Activated CD4-positive, alpha-beta memory T cell treated with anti-CD3 and anti-CD28 coated beads for 36 hours (primary cell): ENCODE measurements at regions of chr19 and their contacts with region 1.

Region 1: GRCh38 chr19:49817964-49818648 is at the start of gene MED25:
- DNase-seq: peak; percentile 91
- H3K4me3 Mint-ChIP-seq: peak within 1 kb of the TSS; percentile 93
- H3K27ac Mint-ChIP-seq: peak within 1 kb of the TSS; percentile 98
- H3K4me1 Mint-ChIP-seq: peaks cover 19% of the 10 kb centered on the region
- H3K27me3 Mint-ChIP-seq: no peaks in the 10 kb centered on the region
- total RNA-seq, gene MED25: 45.6 to 50.2 TPM

Region 2: DNA sequence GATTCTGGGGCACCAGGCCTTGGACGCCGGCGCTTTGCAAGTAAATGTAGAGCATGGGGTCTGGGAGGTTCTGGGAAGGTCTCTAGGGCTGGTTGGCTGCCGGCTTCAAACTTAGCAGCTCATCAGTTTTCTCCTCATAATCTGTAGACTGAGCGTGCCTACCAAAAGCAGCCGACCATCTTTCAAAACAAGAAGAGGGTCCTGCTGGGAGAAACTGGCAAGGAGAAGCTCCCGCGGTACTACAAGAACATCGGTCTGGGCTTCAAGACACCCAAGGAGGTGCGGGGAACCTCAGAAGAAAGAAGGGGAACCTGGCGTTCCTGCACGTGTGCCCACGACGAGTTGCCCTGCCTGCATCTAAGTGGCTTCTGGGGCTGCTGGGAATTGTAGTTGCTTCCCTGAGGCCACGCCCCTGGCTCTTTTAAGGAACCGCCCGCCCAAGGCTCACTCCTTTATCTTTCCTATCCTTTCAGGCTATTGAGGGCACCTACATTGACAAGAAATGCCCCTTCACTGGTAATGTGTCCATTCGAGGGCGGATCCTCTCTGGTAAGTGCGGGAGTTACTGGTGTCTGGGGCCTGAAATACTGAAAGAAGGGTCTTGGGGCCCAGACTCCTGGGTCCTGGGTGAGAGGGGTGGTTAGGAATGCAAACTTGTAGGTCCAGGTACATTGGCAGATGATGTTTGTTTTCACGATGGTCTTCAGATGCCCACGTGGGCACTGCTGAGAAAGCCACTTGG is 320.9 kb before region 1 on chr19:
- CTCF ChIA-PET with region 1: no interaction called
- POLR2A ChIA-PET with region 1: no interaction called
- intact Hi-C with region 1: loop called (anchors 5 kb)
- DNase-seq: peak; percentile 83
- H3K4me3 Mint-ChIP-seq: peak overlapping the region; percentile 92
- H3K27ac Mint-ChIP-seq: peak overlapping the region; percentile 97
- H3K4me1 Mint-ChIP-seq: peaks cover 49% of the 10 kb centered on the region
- H3K27me3 Mint-ChIP-seq: no peaks in the 10 kb centered on the region

Region 3: GRCh38 chr19:49590071-49590970 is 227.8 kb before region 1 on chr19:
- CTCF ChIA-PET with region 1: no interaction called
- POLR2A ChIA-PET with region 1: no interaction called
- intact Hi-C with region 1: loop called (anchors 5 kb)
- DNase-seq: peak; percentile 97
- H3K4me3 Mint-ChIP-seq: peak overlapping the region; percentile 80
- H3K27ac Mint-ChIP-seq: peak overlapping the region; percentile 91
- H3K4me1 Mint-ChIP-seq: peaks cover 32% of the 10 kb centered on the region
- H3K27me3 Mint-ChIP-seq: no peaks in the 10 kb centered on the region

Region 4: GRCh38 chr19:49766007-49766937 is 51.8 kb before region 1 on chr19:
- CTCF ChIA-PET with region 1: no interaction called
- POLR2A ChIA-PET with region 1: interaction called, 3 read pairs
- intact Hi-C with region 1: loop called (anchors 1 kb)
- DNase-seq: peak; percentile 100
- H3K4me3 Mint-ChIP-seq: peak overlapping the region; percentile 96
- H3K27ac Mint-ChIP-seq: peak overlapping the region; percentile 95
- H3K4me1 Mint-ChIP-seq: peaks cover 33% of the 10 kb centered on the region
- H3K27me3 Mint-ChIP-seq: no peaks in the 10 kb centered on the region

Region 5: GRCh38 chr19:49850473-49851342 is 32.6 kb after region 1 on chr19 and contains the start of gene PTOV1:
- CTCF ChIA-PET with region 1: no interaction called
- POLR2A ChIA-PET with region 1: interaction called, 8 read pairs
- intact Hi-C with region 1: loop called (anchors 2 kb)
- DNase-seq: peak; percentile 93
- H3K4me3 Mint-ChIP-seq: peak within 1 kb of the TSS; percentile 86
- H3K27ac Mint-ChIP-seq: peak within 1 kb of the TSS; percentile 95
- H3K4me1 Mint-ChIP-seq: peaks cover 41% of the 10 kb centered on the region
- H3K27me3 Mint-ChIP-seq: no peaks in the 10 kb centered on the region
- total RNA-seq, gene PTOV1: 105 to 108 TPM

Region 6: GRCh38 chr19:49869441-49870176 is 51.5 kb after region 1 on chr19:
- CTCF ChIA-PET with region 1: no interaction called
- POLR2A ChIA-PET with region 1: interaction called, 4 read pairs
- intact Hi-C with region 1: loop called (anchors 5 kb)
- DNase-seq: peak; percentile 96
- H3K4me3 Mint-ChIP-seq: no peak overlapping the region
- H3K27ac Mint-ChIP-seq: no peak overlapping the region
- H3K4me1 Mint-ChIP-seq: peaks cover 50% of the 10 kb centered on the region
- H3K27me3 Mint-ChIP-seq: no peaks in the 10 kb centered on the region

Region 7: DNA sequence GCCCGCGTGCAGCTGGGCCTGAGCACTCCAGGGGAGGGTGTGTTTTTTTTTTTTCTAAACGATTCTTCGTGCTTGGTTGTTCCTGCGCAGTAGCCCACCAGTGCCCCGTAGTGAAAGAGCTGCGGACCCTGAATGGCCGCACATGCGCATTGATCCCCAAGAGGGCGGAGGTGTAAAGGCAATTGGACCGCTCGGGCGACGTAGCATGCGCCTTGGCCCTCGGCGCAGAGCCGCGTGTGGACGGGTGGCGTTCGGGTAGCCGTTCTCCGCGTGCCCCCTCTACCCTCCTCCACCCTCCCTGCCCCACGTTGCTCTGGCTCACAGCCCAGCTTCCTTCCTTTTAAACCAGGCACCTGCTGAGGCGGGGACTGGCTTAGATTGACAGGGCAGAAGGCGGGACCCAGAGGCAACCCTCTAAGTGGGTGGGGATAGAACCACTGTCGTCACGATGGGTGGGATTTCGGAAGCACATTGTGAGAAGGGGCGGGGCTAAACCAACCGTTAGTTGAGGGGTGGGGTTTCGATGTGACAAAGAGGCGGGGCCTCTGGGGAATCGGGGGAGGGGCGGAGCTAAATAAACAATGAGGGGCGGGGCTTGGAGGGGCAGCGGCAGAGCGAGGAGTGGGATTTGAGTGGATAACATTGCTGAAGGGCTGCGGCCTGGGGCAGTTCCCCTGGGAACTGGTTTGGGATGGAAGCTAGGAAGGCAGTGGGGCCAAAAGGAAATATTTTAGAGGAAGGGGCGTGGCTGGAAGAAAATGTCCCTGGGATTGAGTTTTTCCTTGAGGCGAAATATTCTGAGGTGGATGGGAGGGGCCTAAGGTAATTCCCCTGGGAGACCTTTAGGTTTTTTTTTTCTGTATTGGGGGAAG is 111.7 kb after region 1 on chr19:
- CTCF ChIA-PET with region 1: no interaction called
- POLR2A ChIA-PET with region 1: interaction called, 3 read pairs
- intact Hi-C with region 1: loop called (anchors 5 kb)
- DNase-seq: peak; percentile 96
- H3K4me3 Mint-ChIP-seq: peak overlapping the region; percentile 98
- H3K27ac Mint-ChIP-seq: peak overlapping the region; percentile 98
- H3K4me1 Mint-ChIP-seq: peaks cover 66% of the 10 kb centered on the region
- H3K27me3 Mint-ChIP-seq: peaks cover 5% of the 10 kb centered on the region